ENCODE measurements at regions of chr16 and their contacts with region 1.

Region 1: GRCh38 chr16:55494994-55495421 is 13.9 kb upstream of the LPCAT2 start:
- H3K4me3 Mint-ChIP-seq: no peak overlapping the region
- H3K27ac Mint-ChIP-seq: no peak overlapping the region
- H3K4me1 Mint-ChIP-seq: peaks cover 27% of the 10 kb centered on the region
- H3K27me3 Mint-ChIP-seq: peaks cover 7% of the 10 kb centered on the region

Region 2: DNA sequence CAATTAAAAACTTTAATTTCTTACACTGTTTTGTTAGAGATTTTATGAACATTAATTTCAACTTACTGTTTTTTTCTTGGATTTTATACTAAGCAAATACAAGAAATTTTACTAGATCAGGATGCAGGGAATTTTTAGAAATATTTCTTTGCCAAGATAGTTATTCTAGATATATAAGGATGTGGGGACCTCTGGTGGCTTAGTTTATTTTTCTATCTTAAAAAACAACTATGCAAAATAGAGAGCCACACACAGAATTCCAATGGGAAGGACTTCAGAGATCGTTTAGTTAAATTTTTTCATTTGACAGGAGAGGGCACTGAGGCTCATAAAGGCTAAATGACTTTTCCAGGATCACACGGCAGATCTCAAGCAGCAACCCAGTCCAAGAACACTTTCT is 48.5 kb after region 1 on chr16:
- intact Hi-C with region 1: loop called (anchors 1 kb)
- H3K4me3 Mint-ChIP-seq: no peak overlapping the region
- H3K27ac Mint-ChIP-seq: no peak overlapping the region
- H3K4me1 Mint-ChIP-seq: peaks cover 9% of the 10 kb centered on the region
- H3K27me3 Mint-ChIP-seq: no peaks in the 10 kb centered on the region

Region 3: DNA sequence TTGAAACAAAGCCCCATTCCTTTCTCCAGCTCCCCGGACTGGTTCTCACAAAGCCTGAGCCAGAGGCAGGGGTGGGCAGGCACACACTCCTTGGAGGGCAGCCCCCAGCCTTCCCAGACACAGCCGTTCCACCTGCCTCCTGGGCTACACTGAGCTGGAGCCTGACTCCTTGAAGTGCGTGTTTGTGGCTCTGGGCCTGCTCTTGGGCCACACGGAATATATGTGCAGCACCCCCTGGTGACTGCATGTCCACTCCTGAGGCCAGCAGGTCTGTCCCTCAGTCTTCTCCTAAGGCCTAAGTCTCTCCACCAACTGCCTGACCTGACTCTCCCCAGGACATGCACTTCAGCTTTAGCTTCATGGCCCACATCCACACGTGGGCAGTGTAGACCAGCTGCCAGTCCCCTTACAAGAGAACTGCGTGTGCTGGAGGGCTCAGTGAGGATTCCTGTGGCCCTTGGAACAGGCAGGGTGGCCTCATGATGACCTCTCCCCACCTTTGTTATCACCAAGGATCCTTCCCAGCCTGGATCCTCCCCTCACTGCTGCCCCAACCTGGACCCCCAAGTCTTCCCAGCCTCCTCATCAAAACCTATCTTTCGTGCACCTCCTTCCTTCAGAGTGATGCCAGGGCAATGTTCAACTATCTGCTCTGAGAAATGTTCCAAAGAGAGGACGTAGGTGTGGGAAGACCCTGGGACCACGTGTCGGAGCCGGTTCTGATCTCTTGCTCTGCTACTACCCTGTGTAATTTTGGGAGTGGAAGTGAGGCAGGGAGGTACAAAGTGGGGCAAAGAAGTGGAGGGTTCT is 148.4 kb after region 1 on chr16:
- intact Hi-C with region 1: loop called (anchors 1 kb)
- H3K4me3 Mint-ChIP-seq: no peak overlapping the region
- H3K27ac Mint-ChIP-seq: no peak overlapping the region
- H3K4me1 Mint-ChIP-seq: no peaks in the 10 kb centered on the region
- H3K27me3 Mint-ChIP-seq: peaks cover 10% of the 10 kb centered on the region

Region 4: DNA sequence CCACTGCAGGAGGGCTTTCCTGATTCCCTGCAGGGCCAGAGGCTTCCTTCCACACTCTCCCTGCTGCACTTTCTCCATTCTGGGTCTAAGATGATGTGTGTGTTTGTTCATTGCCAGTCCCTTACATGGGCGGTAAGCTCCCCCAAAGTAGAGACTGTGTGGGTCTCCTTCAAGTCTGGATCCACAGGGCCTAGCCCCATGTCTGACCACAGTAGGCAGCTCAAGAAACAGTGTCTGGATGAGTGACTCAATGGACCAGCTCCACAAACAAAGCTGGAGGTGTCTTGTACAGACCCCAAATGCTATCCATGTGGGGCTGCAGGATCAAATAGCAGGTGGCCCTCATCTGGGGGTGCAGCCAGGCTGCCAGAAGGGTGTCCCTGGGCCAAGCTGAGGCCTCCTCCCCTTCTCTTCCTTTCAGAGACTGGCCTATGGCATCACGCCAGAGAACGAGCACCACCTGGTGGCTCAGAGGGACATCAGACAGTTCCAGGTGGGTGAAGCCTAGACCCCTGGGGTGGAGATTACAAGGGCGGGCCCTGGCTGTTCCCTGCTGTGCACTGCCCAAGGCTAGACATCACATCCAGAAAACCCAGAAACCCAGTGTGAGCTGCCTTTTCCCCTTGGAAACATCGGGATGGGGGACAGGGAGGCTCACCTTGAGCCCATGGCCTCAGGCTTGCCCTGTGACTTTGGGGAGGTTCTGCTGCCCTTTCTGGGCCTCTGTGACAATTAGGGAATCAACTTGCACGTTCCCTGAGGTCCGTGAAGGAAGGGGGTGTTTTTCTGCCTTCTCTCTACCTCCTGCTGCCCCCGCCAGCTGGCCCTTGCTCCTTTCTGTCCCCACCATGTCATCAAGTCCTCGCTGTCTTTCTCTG is 206.7 kb after region 1 on chr16:
- intact Hi-C with region 1: loop called (anchors 1 kb)
- H3K4me3 Mint-ChIP-seq: no peak overlapping the region
- H3K27ac Mint-ChIP-seq: no peak overlapping the region
- H3K4me1 Mint-ChIP-seq: no peaks in the 10 kb centered on the region
- H3K27me3 Mint-ChIP-seq: peaks cover 12% of the 10 kb centered on the region

Measured in dendritic cell treated with granulocyte-macrophage colony-stimulating factor and Interleukin-4, amounts not matched to agents 40 ng/mL and 50 ng/mL, for 4 days (primary cell).